Activated CD4-positive, alpha-beta T cell treated with anti-CD3 and anti-CD28 coated beads, Interleukin-2, amount 10 ng/mL, durations not matched to agents 24 days and 14 days (primary cell): ENCODE measurements at regions of chr1 and their contacts with region 1.

Region 1: DNA sequence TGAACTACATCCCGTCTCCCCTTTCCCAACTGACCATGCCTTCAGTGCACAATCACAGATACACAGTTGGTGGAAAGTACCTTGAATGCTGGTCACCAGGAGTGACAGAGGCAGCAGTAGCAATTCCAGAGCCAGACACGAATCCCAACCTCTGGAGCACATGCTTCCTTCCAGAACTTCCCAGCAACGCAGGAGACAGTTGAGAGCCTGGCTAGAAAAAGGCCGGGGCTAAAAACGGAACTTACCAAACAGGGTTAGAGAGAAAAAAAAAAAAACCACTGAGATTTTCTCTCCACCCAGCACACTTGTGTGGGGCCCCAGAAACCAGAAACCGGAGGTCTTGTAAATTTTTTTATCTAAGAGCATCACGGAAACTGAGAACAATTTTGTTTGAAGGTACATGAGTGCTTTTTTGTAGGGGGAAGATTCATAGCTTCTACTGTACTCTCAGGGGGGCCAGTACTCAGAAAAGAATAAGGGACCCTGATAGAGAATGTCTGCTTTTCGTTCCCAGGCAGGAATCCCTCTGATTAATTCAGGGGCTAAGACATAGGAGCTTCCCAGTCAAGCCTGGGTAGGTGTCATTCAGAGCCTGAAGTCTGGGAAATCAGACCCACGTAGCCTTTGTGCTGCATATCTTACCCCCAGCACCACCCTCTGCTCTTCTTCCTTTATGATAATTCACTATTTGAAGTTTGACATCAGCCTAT is at the start of gene CD48:
- DNase-seq: peak; percentile 85
- H3K4me3 Mint-ChIP-seq: no peak within 1 kb of the TSS
- H3K27ac Mint-ChIP-seq: no peak within 1 kb of the TSS
- H3K4me1 Mint-ChIP-seq: peaks cover 26% of the 10 kb centered on the region
- H3K27me3 Mint-ChIP-seq: no peaks in the 10 kb centered on the region
- total RNA-seq, gene CD48: 206 and 208 TPM in 2 replicates

Region 2: GRCh38 chr1:160623227-160623633 is 88.5 kb before region 1 on chr1:
- intact Hi-C with region 1: loop called (anchors 1 kb)
- DNase-seq: peak; percentile 78
- H3K4me3 Mint-ChIP-seq: peak overlapping the region; percentile 75
- H3K27ac Mint-ChIP-seq: peak overlapping the region; percentile 99
- H3K4me1 Mint-ChIP-seq: peaks cover 83% of the 10 kb centered on the region
- H3K27me3 Mint-ChIP-seq: no peaks in the 10 kb centered on the region

Region 3: DNA sequence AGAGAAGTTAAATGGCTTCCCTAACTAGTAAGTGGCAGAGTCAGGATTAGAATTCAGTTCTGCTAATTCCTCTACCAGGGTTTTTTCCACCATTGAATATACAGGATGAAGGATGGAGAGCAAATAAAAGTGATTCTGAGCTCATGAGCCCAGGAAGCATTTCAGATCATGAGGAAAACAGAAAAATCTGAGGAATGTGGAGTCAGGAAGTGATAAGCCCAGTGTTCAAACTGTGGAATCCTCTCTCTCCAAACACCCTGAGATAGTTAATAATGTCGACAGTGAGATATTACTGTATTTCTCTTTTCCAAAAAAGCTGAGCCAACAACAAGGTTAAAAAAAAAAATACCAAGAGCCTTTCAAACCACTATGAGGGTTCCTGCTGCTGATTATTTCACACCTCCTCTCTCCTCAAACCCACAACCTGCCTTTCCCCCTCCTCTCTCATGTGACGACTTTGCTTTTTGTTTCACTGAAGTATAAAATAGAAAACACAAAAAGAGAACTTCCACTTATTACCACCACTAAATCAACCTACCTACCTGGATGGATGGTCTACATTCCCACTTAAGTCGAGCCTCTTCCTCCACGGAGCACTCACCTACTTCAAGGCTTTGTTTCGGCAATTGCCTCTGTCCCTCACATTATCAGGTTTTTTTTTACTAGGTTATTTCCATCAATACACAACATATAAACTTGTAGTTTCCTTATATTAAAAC is 73.8 kb before region 1 on chr1:
- intact Hi-C with region 1: loop called (anchors 2 kb)
- DNase-seq: peak; percentile 89
- H3K4me3 Mint-ChIP-seq: peak overlapping the region; percentile 79
- H3K27ac Mint-ChIP-seq: peak overlapping the region; percentile 96
- H3K4me1 Mint-ChIP-seq: peaks cover 86% of the 10 kb centered on the region
- H3K27me3 Mint-ChIP-seq: no peaks in the 10 kb centered on the region

Region 4: DNA sequence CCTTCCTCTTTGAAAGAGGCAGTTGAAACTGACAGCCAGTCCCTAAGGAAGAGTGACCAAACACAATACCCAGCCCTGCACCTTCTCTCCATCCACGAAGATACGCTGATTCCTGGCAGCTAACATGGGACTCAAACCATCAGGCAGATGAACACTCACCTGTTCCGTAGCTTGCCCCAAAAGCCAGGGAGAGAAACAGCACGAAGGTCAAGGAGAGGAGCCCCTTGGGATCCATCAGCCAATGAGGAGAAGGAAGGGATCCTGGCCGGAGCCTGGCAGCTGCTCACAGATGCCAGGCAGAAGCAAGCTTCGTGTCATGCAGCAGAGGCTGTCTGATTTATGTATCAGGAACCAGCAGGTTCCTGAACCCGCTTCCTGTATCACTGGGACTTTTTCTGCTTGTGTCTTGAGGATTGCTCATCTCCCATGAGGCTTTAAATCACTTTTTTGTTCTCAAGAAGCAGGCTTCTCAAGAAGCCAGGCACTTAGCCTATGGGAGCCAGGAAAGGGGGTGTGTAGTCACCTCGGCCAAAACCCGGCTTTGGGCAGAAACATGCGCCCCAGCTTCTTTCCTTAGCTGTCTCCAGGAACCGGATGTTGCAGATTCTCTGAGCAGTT is 64.9 kb before region 1 on chr1 and contains the start of gene SLAMF1:
- intact Hi-C with region 1: loop called (anchors 1 kb)
- DNase-seq: peak; percentile 81
- H3K4me3 Mint-ChIP-seq: peak within 1 kb of the TSS; percentile 98
- H3K27ac Mint-ChIP-seq: peak within 1 kb of the TSS; percentile 98
- H3K4me1 Mint-ChIP-seq: peaks cover 49% of the 10 kb centered on the region
- H3K27me3 Mint-ChIP-seq: no peaks in the 10 kb centered on the region
- total RNA-seq, gene SLAMF1: 113 and 114 TPM in 2 replicates

Region 5: GRCh38 chr1:160768295-160768657 is 56.5 kb after region 1 on chr1:
- intact Hi-C with region 1: loop called (anchors 1 kb)
- DNase-seq: peak; percentile 95
- H3K4me3 Mint-ChIP-seq: peak overlapping the region; percentile 88
- H3K27ac Mint-ChIP-seq: peak overlapping the region; percentile 98
- H3K4me1 Mint-ChIP-seq: peaks cover 33% of the 10 kb centered on the region
- H3K27me3 Mint-ChIP-seq: peaks cover 2% of the 10 kb centered on the region